Activated CD4-positive, alpha-beta T cell treated with anti-CD3 and anti-CD28 coated beads for 36 hours (primary cell): ENCODE measurements at regions of chr2 and their contacts with region 1.

Region 1: GRCh38 chr2:33395655-33396249 is 80.7 kb upstream of the RASGRP3 start:
- DNase-seq: peak; percentile 73
- ATAC-seq: no peak
- H3K4me3 Mint-ChIP-seq: no peak overlapping the region
- H3K27ac Mint-ChIP-seq: no peak overlapping the region
- H3K4me1 Mint-ChIP-seq: no peaks in the 10 kb centered on the region
- H3K27me3 Mint-ChIP-seq: no peaks in the 10 kb centered on the region

Region 2: GRCh38 chr2:33033606-33034081 is 362.1 kb before region 1 on chr2:
- CTCF ChIA-PET with region 1: no interaction called
- POLR2A ChIA-PET with region 1: no interaction called
- intact Hi-C with region 1: loop called in 1 of 2 experiments (anchors 1 kb)
- DNase-seq: no peak
- ATAC-seq: no peak
- H3K4me3 Mint-ChIP-seq: no peak overlapping the region
- H3K27ac Mint-ChIP-seq: no peak overlapping the region
- H3K4me1 Mint-ChIP-seq: no peaks in the 10 kb centered on the region
- H3K27me3 Mint-ChIP-seq: peaks cover 7% of the 10 kb centered on the region

Region 3: GRCh38 chr2:33242845-33243244 is 152.9 kb before region 1 on chr2:
- CTCF ChIA-PET with region 1: no interaction called
- POLR2A ChIA-PET with region 1: no interaction called
- intact Hi-C with region 1: no loop called
- DNase-seq: no peak
- ATAC-seq: no peak
- H3K4me3 Mint-ChIP-seq: no peak overlapping the region
- H3K27ac Mint-ChIP-seq: no peak overlapping the region
- H3K4me1 Mint-ChIP-seq: no peaks in the 10 kb centered on the region
- H3K27me3 Mint-ChIP-seq: no peaks in the 10 kb centered on the region